ENCODE measurements at regions of chr4 and their contacts with region 1.

Region 1: DNA sequence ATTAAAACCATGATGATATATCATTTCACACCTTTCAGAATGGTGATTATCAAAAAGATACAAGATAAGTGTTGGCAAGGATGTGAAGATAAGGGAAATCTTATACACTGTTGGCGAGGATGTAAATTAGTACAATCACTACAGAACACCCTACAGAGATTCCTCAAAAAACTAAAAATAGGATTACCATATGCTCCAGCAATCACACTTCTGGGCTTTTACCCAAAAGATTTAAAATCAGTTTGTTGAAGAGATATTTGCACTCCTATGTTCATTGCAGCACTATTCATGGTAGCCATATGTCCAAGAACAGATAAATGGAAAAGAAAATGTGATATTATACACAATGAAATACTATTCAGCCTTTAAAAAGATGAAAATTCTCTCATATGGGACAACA is 240.4 kb downstream of the GABRG1 start:
- DNase-seq: no peak

Region 2: DNA sequence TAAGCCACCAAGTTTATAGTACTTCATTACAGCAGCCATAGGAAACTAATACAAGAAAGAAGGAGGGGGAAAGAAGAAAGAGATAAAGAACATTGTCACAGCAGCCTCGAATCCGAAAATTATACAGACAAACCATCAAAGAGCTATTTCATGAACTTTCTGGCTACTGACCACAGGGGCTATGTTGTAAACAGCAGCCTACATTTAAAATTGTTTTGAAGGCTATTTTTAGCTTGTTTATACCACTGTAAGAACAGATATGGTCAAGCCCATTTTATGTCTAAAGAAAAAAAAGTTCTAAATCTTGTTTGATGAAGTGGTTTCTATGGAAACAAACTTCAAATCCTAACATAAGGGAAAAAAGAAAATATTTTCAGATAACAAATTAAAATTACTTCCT is 41.6 kb before region 1 on chr4:
- in situ Hi-C with region 1: loop called (anchors 5 kb)
- DNase-seq: no peak

Measured in G401 (cell line).